ENCODE measurements at regions of chr4 and their contacts with region 1.

Region 1: GRCh38 chr4:82811838-82812341 is 13.3 kb upstream of the SCD5 start:
- DNase-seq: no peak
- ATAC-seq: peak; percentile 31

Region 2: DNA sequence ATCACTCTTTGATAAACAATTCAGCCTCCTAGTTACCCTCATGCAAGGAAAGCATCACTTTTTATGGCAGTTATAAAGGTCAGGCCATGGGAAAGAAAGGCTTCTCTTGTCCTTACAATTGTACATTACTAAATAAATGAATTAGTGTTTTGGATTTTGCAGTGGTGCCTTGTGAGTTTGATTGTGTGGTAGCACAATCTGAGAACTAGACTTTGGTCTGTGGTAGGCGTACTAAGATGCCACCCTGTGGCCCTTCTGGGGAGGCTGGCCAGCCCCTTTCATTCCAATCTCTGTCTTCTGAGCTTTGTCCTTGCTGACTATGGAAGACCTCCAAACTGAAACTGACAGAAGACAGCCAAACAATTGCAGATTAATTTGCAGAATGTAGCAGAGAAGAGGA is 423.5 kb before region 1 on chr4:
- intact Hi-C with region 1: no loop called
- DNase-seq: no peak
- ATAC-seq: no peak

Region 3: GRCh38 chr4:82629238-82630000 is 182.5 kb before region 1 on chr4:
- intact Hi-C with region 1: loop called (anchors 5 kb)
- DNase-seq: no peak
- ATAC-seq: no peak

Region 4: GRCh38 chr4:83413676-83414075 is 601.8 kb after region 1 on chr4:
- intact Hi-C with region 1: no loop called
- DNase-seq: no peak
- ATAC-seq: no peak